A673 (cell line): ENCODE measurements at regions of chrX and their contacts with region 1.

Region 1: DNA sequence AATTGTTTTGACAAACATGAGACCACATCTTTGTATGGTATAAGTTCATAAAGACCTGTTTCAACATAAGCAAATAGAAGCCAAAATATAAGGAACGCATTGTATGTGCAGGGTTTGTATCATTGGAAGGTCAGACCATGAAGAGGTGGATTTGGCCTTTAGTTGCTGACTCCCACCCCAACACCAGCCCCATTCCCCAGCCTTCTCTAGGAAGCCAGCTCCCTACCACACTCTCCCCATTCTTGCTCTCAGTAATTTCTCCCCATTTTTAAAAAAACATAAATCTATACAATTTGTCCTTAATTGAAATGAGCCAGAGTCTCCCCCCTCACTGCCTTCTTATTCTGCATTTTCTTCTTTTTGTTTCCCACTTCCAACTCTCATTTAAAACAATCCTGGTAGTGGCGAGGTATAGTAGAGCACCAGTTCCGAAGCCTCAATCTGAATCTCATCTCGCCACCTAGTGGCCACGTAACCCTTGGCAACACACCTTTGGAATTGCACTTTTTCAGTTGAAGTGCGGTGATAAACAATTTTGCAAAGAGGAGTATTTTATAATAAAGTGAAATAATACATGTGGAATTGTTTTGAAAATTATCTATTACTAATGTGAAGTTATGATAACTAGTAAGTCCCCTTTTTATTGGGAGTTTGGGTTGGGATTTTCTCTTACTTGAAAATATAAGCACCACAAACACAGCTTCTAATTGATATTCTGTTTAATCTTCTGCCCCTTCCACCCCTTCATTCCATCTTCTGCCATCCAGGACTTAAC is 126.6 kb downstream of the ASB9 start:
- DNase-seq: peak; percentile 46
- H3K4me3 ChIP-seq: no peak overlapping the region
- H3K27ac ChIP-seq: no peak overlapping the region
- H3K4me1 ChIP-seq: no peaks in the 10 kb centered on the region
- H3K27me3 ChIP-seq: peaks cover 4% of the 10 kb centered on the region
- CTCF ChIP-seq: peak; percentile 90

Region 2: GRCh38 chrX:14039344-14039743 is 1103.9 kb before region 1 on chrX:
- CTCF ChIA-PET with region 1: no interaction called
- POLR2A ChIA-PET with region 1: no interaction called
- intact Hi-C with region 1: loop called (anchors 2 kb)
- DNase-seq: peak; percentile 71
- H3K4me3 ChIP-seq: no peak overlapping the region
- H3K27ac ChIP-seq: no peak overlapping the region
- H3K4me1 ChIP-seq: no peaks in the 10 kb centered on the region
- H3K27me3 ChIP-seq: no peaks in the 10 kb centered on the region
- CTCF ChIP-seq: peak; percentile 78

Region 3: GRCh38 chrX:14095702-14096101 is 1047.5 kb before region 1 on chrX:
- CTCF ChIA-PET with region 1: interaction called, 3 read pairs
- POLR2A ChIA-PET with region 1: no interaction called
- intact Hi-C with region 1: loop called (anchors 10 kb)
- DNase-seq: peak; percentile 73
- H3K4me3 ChIP-seq: no peak overlapping the region
- H3K27ac ChIP-seq: no peak overlapping the region
- H3K4me1 ChIP-seq: no peaks in the 10 kb centered on the region
- H3K27me3 ChIP-seq: peaks cover 11% of the 10 kb centered on the region
- CTCF ChIP-seq: peak; percentile 86

Region 4: GRCh38 chrX:14546190-14546589 is 597.0 kb before region 1 on chrX:
- CTCF ChIA-PET with region 1: no interaction called
- POLR2A ChIA-PET with region 1: no interaction called
- intact Hi-C with region 1: loop called (anchors 10 kb)
- DNase-seq: peak; percentile 61
- H3K4me3 ChIP-seq: no peak overlapping the region
- H3K27ac ChIP-seq: no peak overlapping the region
- H3K4me1 ChIP-seq: no peaks in the 10 kb centered on the region
- H3K27me3 ChIP-seq: peaks cover 15% of the 10 kb centered on the region
- CTCF ChIP-seq: no peak